AG04449 (cell line): ENCODE measurements at regions of chr1 and their contacts with region 1.

Region 1: DNA sequence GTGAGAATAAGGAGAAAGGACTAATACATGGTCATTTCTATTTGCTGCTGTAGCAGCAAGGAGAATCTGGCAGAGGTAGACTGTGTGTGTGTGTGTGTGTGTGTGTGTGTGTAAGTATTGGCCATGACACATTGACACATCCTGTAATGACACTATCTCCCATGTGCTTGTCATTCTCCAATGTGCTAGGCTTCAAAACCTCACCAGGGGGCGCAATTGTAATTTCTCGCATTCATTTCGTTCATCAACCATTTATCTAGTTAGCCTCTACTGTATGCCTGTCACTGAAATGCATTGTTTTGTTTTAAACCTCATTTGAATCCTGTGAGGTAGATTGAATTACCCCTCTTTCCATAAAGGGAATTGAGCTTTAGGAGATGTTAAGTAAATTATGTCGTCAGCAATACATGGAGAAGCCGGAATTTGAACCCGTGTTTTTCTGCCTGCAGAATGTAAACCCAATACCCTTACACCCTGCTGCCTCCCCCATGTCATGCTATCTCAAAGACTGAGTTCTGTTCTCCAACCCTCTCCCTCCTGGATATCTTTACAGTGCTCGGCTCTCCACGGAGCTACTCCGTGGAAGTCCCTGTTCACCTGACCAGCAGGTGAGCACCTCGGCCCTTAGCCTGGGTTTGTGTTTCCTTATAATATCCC is 100.8 kb downstream of the UCK2 start:
- DNase-seq: no peak
- H3K4me3 ChIP-seq: no peak overlapping the region
- CTCF ChIP-seq: peak; percentile 72

Region 2: DNA sequence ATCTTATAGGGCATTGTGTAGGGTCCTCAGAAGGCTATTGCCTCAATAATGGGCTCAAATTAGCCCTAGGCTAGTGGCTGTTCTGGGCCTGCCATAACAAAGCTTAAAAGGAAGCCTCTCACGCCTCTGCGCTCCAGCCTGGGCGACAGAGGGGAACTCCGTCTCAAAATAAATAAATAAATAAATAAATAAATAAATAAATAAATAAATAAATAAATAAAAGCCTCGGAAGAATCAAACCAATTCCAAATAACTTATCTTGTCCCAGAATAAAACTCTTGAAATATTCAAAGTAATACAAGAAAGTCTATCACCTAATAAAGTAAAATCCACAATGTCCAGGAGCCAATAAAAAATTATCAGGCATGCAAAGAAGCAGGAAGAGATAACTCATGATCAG is 215.4 kb before region 1 on chr1:
- CTCF ChIA-PET with region 1: interaction called, 11 read pairs
- POLR2A ChIA-PET with region 1: no interaction called
- DNase-seq: no peak
- H3K4me3 ChIP-seq: no peak overlapping the region
- CTCF ChIP-seq: no peak

Region 3: DNA sequence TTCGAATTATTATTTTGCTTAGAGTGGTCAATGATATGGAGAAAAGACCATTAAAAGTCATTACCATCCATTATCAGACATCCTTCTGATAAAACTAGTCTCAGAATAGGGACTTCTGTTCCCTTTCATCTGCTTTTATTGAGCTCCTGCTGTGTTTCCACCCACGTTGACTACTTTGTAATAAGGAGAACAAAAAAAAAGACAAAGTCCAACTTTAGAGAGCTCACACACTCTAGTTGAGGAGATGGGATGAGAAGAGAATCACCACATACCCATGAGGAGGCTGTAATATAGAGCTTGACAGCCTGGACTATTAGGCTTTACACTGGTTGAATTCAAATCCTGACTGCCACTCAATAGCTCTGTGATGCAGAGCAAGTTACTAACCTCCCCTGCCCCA is 202.0 kb before region 1 on chr1:
- CTCF ChIA-PET with region 1: interaction called, 10 read pairs
- POLR2A ChIA-PET with region 1: no interaction called
- DNase-seq: no peak
- H3K4me3 ChIP-seq: no peak overlapping the region
- CTCF ChIP-seq: no peak

Region 4: GRCh38 chr1:165949335-165950130 is 21.3 kb after region 1 on chr1:
- CTCF ChIA-PET with region 1: interaction called, 12 read pairs
- POLR2A ChIA-PET with region 1: no interaction called
- DNase-seq: no peak
- H3K4me3 ChIP-seq: no peak overlapping the region
- CTCF ChIP-seq: no peak

Region 5: DNA sequence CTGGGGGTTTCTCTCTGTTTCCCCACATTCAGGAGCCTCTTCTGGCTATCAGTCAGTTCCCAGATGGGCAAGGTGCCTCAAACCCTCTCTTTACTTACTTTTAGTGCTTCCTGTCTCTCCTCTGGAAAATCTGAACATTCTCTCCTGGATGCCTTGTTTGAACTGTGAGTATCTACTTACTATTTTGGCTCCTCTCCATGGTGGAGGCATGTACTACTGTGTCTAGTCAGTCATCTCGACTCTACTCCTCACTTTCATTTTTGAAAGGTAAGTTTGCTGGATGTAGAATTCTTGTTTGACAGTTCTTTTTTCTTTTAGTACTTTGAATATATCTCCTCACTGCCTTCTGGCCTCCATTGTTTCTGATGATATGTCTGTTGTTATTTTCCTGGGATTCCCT is 309.5 kb after region 1 on chr1:
- CTCF ChIA-PET with region 1: no interaction called
- POLR2A ChIA-PET with region 1: no interaction called
- DNase-seq: no peak
- H3K4me3 ChIP-seq: no peak overlapping the region
- CTCF ChIP-seq: no peak

Region 6: GRCh38 chr1:166479052-166479631 is 550.9 kb after region 1 on chr1:
- CTCF ChIA-PET with region 1: interaction called, 185 read pairs
- POLR2A ChIA-PET with region 1: no interaction called
- DNase-seq: no peak
- H3K4me3 ChIP-seq: no peak overlapping the region
- CTCF ChIP-seq: peak; percentile 67